Panc1 (cell line): ENCODE measurements at regions of chr12 and their contacts with region 1.

Region 1: GRCh38 chr12:2890388-2891239 is at the start of gene TULP3:
- DNase-seq: peak; percentile 62
- ATAC-seq: peak; percentile 96
- H3K4me3 ChIP-seq: peak within 1 kb of the TSS; percentile 87
- H3K27ac ChIP-seq: peak within 1 kb of the TSS; percentile 91
- H3K4me1 ChIP-seq: peaks cover 6% of the 10 kb centered on the region
- H3K27me3 ChIP-seq: no peaks in the 10 kb centered on the region
- CTCF ChIP-seq: no peak
- total RNA-seq, gene TULP3: 29.3 TPM

Region 2: DNA sequence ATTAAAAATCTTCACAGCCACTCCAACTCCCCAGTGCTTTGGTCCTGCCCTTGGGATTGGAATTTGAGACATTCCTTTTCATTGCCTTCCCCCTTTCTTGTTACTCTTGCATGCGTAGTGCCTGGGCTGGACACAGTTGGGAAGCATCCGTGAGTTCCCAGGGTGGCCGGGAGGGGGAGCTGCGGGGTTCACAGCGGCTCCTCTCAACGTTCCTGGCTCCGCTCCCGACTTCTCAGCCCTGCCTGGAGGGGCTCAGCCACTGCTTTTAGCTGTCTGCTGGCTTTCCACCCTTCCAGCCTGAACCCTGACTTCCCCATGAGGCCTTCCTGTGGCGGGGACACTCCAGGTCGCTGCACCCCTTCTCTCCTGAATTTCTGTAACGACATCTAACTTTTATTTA is 37.0 kb before region 1 on chr12:
- CTCF ChIA-PET with region 1: interaction called, 14 read pairs
- POLR2A ChIA-PET with region 1: no interaction called
- in situ Hi-C with region 1: no loop called
- intact Hi-C with region 1: no loop called
- DNase-seq: no peak
- ATAC-seq: peak; percentile 77
- H3K4me3 ChIP-seq: no peak overlapping the region
- H3K27ac ChIP-seq: no peak overlapping the region
- H3K4me1 ChIP-seq: no peaks in the 10 kb centered on the region
- H3K27me3 ChIP-seq: no peaks in the 10 kb centered on the region
- CTCF ChIP-seq: peak; percentile 88